Activated naive CD4-positive, alpha-beta T cell treated with anti-CD3 and anti-CD28 coated beads for 36 hours (primary cell): ENCODE measurements at regions of chr11 and their contacts with region 1.

Region 1: GRCh38 chr11:34997952-34998528 is 81.6 kb downstream of the PDHX start:
- DNase-seq: no peak
- H3K4me3 Mint-ChIP-seq: no peak overlapping the region
- H3K27ac Mint-ChIP-seq: peak overlapping the region; percentile 9
- H3K4me1 Mint-ChIP-seq: peaks cover 30% of the 10 kb centered on the region
- H3K27me3 Mint-ChIP-seq: no peaks in the 10 kb centered on the region

Region 2: DNA sequence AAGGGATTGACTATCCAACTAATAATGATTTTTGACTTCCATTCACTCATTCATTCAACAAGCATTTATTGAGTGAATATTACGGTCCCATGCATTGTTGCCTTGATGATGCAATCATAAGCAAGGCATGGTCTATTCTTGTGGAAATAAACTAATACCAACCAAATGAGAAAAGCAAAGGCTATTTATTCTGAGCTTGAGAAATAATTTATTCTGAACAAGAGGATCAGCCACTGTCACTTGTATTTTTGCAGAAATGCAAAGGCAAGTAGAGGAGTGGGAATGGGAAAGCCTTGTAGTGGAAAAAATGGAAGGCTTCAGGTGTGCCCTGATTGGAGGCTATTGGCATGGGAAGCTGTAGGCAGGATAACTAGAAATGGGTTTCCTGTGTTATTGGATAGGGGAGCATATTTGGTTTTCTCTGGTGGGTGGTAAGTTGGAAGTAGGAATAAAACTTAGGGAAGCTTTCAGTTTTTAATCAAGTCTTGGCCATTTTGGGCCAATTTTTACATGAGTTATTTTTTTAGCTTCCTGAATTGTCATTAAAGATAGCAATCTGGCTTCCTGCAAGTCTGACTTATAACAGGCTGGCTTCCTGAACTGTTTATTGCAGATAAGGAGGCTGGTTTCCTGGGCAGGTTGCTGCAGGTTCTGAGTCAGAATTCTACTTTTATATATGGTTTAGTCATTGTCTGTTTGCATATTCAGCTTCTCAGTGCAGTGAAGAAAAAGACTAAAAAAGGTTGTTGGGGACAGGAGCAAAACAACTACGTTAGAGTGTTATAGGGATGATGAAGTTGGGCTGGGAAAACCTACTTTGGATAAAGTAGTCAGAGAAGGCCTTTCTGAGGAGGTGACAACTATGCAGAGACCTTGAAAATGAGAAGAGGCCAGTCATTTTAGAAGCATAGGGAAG is 188.6 kb before region 1 on chr11:
- CTCF ChIA-PET with region 1: no interaction called
- intact Hi-C with region 1: no loop called
- DNase-seq: no peak
- H3K4me3 Mint-ChIP-seq: no peak overlapping the region
- H3K27ac Mint-ChIP-seq: no peak overlapping the region
- H3K4me1 Mint-ChIP-seq: peaks cover 3% of the 10 kb centered on the region
- H3K27me3 Mint-ChIP-seq: peaks cover 29% of the 10 kb centered on the region

Region 3: GRCh38 chr11:34926101-34926830 is 71.8 kb before region 1 on chr11:
- CTCF ChIA-PET with region 1: interaction called, 5 read pairs
- intact Hi-C with region 1: loop called (anchors 1 kb)
- DNase-seq: peak; percentile 22
- H3K4me3 Mint-ChIP-seq: no peak overlapping the region
- H3K27ac Mint-ChIP-seq: no peak overlapping the region
- H3K4me1 Mint-ChIP-seq: peaks cover 17% of the 10 kb centered on the region
- H3K27me3 Mint-ChIP-seq: no peaks in the 10 kb centered on the region

Region 4: DNA sequence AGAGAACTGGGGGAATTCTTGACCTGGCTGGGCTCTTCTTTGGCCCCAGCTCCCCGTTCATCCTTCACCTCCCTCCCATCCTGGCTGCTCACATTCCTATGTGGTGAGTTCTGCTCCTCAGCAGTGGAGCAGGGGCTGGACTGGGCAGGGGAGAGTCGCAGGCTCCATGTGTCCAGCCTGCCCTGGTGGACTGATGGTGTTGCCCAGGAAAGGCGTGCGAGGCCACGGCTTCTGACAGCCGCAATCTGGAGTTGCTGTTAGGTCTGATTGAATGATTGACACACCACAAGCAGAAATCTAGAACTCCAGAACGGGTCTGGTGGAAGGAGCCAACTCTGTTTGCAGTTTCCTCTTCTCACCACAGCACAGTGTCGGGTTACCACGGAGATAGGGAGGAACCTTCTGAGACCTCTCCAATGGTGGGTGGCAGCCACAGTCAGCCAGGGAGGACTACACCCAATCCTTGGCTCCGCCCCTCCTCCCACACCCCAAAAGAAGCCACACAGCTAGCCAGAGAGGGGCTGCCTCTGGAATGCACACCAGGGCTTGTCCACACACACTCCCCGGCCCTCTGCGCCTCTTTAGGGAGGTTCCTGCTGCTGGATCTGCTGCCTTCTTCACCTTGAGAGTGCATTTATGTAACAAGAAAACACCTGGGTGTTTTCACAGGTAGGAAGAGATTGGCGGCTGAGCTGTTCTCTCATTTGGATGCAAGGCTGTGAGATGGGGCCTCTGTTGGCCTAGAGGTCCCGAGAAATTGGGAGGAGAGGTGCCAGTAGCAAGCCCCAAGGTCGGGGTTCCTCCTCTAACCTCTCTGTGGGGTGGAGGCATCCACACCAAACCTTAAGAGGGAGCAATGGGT is 84.5 kb after region 1 on chr11:
- CTCF ChIA-PET with region 1: no interaction called
- intact Hi-C with region 1: loop called (anchors 1 kb)
- DNase-seq: peak; percentile 89
- H3K4me3 Mint-ChIP-seq: peak overlapping the region; percentile 66
- H3K27ac Mint-ChIP-seq: peak overlapping the region; percentile 90
- H3K4me1 Mint-ChIP-seq: peaks cover 91% of the 10 kb centered on the region
- H3K27me3 Mint-ChIP-seq: no peaks in the 10 kb centered on the region

Region 5: GRCh38 chr11:35237860-35238715 is 240.0 kb after region 1 on chr11:
- CTCF ChIA-PET with region 1: interaction called, 10 read pairs
- intact Hi-C with region 1: loop called (anchors 1 kb)
- DNase-seq: peak; percentile 79
- H3K4me3 Mint-ChIP-seq: no peak overlapping the region
- H3K27ac Mint-ChIP-seq: peak overlapping the region; percentile 34
- H3K4me1 Mint-ChIP-seq: peaks cover 69% of the 10 kb centered on the region
- H3K27me3 Mint-ChIP-seq: no peaks in the 10 kb centered on the region

Region 6: GRCh38 chr11:35485656-35486322 is 487.7 kb after region 1 on chr11:
- CTCF ChIA-PET with region 1: no interaction called
- intact Hi-C with region 1: loop called (anchors 1 kb)
- DNase-seq: peak; percentile 84
- H3K4me3 Mint-ChIP-seq: no peak overlapping the region
- H3K27ac Mint-ChIP-seq: no peak overlapping the region
- H3K4me1 Mint-ChIP-seq: no peaks in the 10 kb centered on the region
- H3K27me3 Mint-ChIP-seq: peaks cover 34% of the 10 kb centered on the region